ENCODE measurements at regions of chr17 and their contacts with region 1.

Region 1: GRCh38 chr17:68771867-68772515 is 170.8 kb upstream of the FAM20A start:
- DNase-seq: peak; percentile 52
- H3K4me3 ChIP-seq: peak overlapping the region; percentile 31 to 52; a peak in 3 of 4 replicates
- H3K27ac ChIP-seq: no peak overlapping the region
- H3K4me1 ChIP-seq: peaks cover 2 to 8% of the 10 kb centered on the region in 2 experiments
- H3K27me3 ChIP-seq: no peaks in the 10 kb centered on the region; the same call in 1 of the 2 replicates
- CTCF ChIP-seq: peak; percentile 87
- EP300 ChIP-seq: no peak
- RAD21 ChIP-seq: peak; percentile 71

Region 2: DNA sequence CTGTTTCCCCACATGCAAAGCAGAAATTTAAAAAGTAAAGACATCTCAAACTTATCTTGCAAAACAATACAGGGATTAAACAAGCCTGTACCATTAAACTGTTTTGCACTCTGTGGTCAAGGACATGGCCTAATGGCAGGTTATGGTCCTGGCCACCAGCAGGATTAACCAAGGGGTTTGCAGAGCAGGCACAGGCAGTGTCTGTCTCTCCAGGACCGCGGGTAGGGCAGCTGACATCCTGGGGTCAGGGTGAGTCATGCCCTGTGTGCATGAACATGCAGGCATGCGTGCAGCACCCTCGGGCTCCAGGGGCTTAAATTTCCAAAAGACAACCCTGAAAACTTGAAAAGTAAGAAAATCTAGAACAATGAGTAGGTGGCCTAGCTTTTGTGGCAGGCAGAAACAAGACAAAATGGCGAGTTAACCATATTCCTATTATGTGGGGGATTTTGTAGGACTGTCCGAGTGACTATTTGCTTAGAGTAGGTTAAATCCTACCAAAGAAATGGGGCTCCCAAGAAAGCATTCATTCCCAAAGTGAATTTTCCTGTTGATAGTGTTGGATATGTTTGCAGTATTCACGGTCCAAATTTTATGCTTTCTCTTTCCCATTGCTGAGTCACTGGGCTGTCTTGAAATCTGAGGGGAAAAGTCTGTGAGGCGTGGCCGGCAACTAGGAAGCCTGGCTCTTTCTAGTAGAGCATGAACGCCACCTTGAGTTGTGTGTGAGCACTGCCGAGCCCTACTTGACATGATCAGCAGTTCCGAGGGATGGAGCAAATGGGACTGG is 12.5 kb before region 1 on chr17:
- CTCF ChIA-PET with region 1: interaction called, 11 read pairs
- POLR2A ChIA-PET with region 1: no interaction called
- DNase-seq: peak; percentile 85
- H3K4me3 ChIP-seq: peak overlapping the region; percentile 42 to 52; a peak in 3 of 4 replicates
- H3K27ac ChIP-seq: peak overlapping the region; percentile 71 to 77
- H3K4me1 ChIP-seq: peaks cover 4% of the 10 kb centered on the region in 2 experiments; a peak in 2 of 4 replicates
- H3K27me3 ChIP-seq: no peaks in the 10 kb centered on the region
- CTCF ChIP-seq: peak; percentile 99
- EP300 ChIP-seq: no peak; a peak in 1 of 4 replicates
- RAD21 ChIP-seq: peak; percentile 99

Region 3: DNA sequence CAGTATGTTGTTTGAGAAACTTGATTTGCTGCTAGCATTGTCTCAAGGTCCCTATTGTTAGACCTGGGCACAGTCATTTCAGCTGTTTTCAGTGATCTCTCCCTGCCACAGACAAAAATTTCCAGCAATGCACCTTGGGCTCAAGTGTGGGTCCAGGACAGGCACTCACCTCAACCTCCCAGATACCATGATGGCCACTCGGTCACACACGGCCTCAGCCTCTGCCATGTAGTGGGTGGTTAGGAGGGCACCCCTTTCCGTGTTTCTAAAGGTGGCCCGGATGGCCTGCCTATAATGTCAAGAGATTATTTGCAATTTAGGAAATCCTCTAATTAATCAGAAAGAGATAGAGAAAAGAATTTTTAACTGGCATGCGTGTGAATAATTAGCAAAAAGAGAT is 103.5 kb after region 1 on chr17:
- CTCF ChIA-PET with region 1: no interaction called
- POLR2A ChIA-PET with region 1: no interaction called
- DNase-seq: no peak
- H3K4me3 ChIP-seq: no peak overlapping the region
- H3K27ac ChIP-seq: no peak overlapping the region
- H3K4me1 ChIP-seq: no peaks in the 10 kb centered on the region
- H3K27me3 ChIP-seq: peaks cover 6% of the 10 kb centered on the region; the same call in 1 of the 2 replicates
- CTCF ChIP-seq: no peak
- EP300 ChIP-seq: no peak
- RAD21 ChIP-seq: no peak

Region 4: GRCh38 chr17:69223809-69224208 is 451.8 kb after region 1 on chr17:
- CTCF ChIA-PET with region 1: interaction called, 16 read pairs
- POLR2A ChIA-PET with region 1: no interaction called
- DNase-seq: no peak
- H3K4me3 ChIP-seq: no peak overlapping the region
- H3K27ac ChIP-seq: no peak overlapping the region
- H3K4me1 ChIP-seq: no peaks in the 10 kb centered on the region
- H3K27me3 ChIP-seq: no peaks in the 10 kb centered on the region; the same call in 1 of the 2 replicates
- CTCF ChIP-seq: no peak
- EP300 ChIP-seq: no peak
- RAD21 ChIP-seq: no peak

Region 5: DNA sequence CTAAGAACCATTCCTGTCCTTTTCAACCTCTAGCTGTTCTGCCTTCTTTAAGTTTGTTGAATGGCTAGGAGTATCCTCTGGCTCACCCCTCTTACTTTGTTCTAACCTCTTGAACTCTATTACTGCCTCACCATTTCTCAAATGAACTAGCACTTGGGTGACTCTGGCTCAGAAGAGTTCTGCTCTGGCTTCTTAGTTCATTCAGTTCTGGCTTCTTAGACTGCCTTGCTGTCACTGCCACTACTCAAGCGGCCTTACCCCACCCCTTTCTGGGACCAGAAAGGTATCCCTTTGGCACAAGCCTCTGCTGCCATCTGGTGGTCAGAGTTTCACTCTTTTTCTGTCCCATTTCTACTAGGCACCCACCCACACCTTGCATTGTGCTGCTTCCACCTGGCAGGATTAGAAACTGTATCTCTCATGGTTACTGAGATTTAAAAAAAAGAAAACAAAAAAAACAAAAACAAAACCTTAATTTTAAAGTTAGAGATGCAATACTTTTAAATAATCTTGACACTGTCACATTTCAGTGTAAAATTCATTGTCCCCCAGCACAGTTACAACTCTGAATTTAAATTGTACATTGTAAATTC is 463.4 kb after region 1 on chr17:
- CTCF ChIA-PET with region 1: interaction called, 185 read pairs
- POLR2A ChIA-PET with region 1: no interaction called
- DNase-seq: peak; percentile 61
- H3K4me3 ChIP-seq: no peak overlapping the region; a peak in 1 of 4 replicates
- H3K27ac ChIP-seq: no peak overlapping the region
- H3K4me1 ChIP-seq: no peaks in the 10 kb centered on the region
- H3K27me3 ChIP-seq: no peaks in the 10 kb centered on the region
- CTCF ChIP-seq: peak; percentile 98
- EP300 ChIP-seq: no peak
- RAD21 ChIP-seq: peak; percentile 97

Region 6: DNA sequence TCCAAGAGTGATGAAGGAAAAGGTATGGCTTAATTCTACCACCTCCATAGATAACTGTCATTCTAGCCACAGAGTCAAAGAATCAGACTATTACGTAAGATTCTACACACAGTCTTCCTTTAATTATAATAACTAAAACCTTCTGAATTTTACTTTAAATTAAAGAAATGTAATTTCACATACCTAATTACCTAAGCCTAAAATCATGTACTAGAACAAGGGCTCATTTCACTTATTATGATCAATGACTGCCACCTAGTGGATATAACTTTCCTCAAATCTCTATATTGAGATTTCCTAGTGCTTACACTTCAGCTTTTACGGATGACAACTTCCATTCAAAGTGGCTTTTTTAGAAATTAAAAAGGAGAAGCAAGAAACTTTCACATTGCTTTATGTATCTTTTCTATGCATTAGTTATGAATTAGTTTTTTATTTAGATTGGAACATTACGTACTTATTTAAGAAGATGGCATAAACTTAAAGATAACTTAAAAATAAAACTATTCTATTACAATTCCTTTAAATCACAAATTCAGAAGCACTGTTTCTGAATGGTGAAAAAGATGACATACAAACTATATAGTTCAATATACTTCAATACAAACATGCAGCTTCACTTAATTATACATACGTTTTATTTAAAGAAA is 474.9 kb after region 1 on chr17:
- CTCF ChIA-PET with region 1: interaction called, 185 read pairs
- POLR2A ChIA-PET with region 1: no interaction called
- DNase-seq: peak; percentile 39
- H3K4me3 ChIP-seq: no peak overlapping the region; a peak in 1 of 4 replicates
- H3K27ac ChIP-seq: no peak overlapping the region
- H3K4me1 ChIP-seq: peaks cover 0 to 4% of the 10 kb centered on the region in 2 experiments; a peak in 1 of 4 replicates
- H3K27me3 ChIP-seq: no peaks in the 10 kb centered on the region
- CTCF ChIP-seq: peak; percentile 95
- EP300 ChIP-seq: no peak
- RAD21 ChIP-seq: peak; percentile 80

Region 7: GRCh38 chr17:69269131-69269998 is 497.4 kb after region 1 on chr17:
- CTCF ChIA-PET with region 1: interaction called, 11 read pairs
- POLR2A ChIA-PET with region 1: no interaction called
- DNase-seq: no peak
- H3K4me3 ChIP-seq: peak overlapping the region in 1 of 2 experiments; percentile 20; a peak in 1 of 4 replicates
- H3K27ac ChIP-seq: peak overlapping the region; percentile 22 to 69; a peak in 3 of 4 replicates
- H3K4me1 ChIP-seq: peaks cover 0 to 8% of the 10 kb centered on the region in 2 experiments; a peak in 3 of 4 replicates
- H3K27me3 ChIP-seq: no peaks in the 10 kb centered on the region
- CTCF ChIP-seq: no peak
- EP300 ChIP-seq: peak in 1 of 2 experiments; percentile 89; a peak in 3 of 4 replicates
- RAD21 ChIP-seq: no peak